H1 (cell line): ENCODE measurements at regions of chr11 and their contacts with region 1.

Region 1: DNA sequence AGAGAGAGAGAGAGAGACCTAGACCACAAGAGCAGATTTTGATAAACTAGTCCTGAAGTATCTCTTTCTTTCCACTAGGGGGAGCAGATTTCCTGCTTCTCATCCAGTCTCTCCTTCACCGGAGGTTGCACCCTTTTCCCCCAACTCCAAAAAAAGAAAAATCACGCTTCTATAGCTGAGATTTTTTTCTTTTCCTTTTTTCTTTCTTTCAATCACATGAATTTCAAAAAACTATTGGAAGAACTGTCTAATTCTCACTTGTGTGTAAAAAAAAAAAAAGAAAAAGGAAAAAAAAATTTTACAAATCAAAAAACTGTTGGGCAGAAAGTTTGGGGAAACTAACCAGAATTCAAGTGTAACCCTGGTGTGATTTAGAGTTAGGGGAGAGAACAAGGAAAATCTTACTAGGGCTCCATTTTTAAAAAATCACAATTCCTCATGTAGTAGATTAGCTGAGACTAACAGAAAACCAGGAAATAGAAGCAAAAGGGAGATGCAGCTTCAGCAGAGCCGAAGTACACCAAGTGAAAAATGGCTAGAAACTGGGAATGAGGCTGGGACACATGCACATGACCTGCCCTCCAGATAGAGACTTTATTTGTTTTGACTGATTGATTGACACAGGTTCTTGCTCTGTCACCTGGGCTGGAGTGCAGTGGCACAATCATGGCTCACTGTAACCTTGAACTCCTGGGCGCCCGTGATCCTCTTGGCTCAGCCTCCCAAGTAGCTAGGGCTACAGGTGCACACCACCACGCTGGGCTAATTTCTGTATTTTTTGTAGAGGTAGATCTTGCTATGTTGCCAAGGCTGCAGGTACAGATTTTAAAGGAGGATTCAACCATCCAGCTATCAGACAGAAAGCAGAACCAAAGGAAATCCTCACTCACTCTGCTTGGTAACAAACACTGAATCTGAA is 27.1 kb downstream of the SDHD start:
- DNase-seq: no peak
- H3K4me3 ChIP-seq: no peak overlapping the region
- H3K27ac ChIP-seq: no peak overlapping the region
- H3K4me1 ChIP-seq: no peaks in the 10 kb centered on the region
- H3K27me3 ChIP-seq: no peaks in the 10 kb centered on the region
- CTCF ChIP-seq: peak in 2 of 3 experiments; percentile 53 to 59; a peak in 3 of 4 replicates
- EP300 ChIP-seq: no peak
- POLR2A ChIP-seq: no peak
- RAD21 ChIP-seq: peak; percentile 64 to 65

Region 2: GRCh38 chr11:112086422-112087191 is 27.2 kb before region 1 on chr11 and contains the starts of genes SDHD and TIMM8B:
- CTCF ChIA-PET with region 1: interaction called, 13 read pairs
- POLR2A ChIA-PET with region 1: interaction called, 3 read pairs
- DNase-seq: peak; percentile 84 to 95
- H3K4me3 ChIP-seq: peak within 1 kb of the TSS; percentile 85 to 99 (median 90)
- H3K27ac ChIP-seq: peak within 1 kb of the TSS; percentile 79
- H3K4me1 ChIP-seq: peaks cover 0 to 3% (median 0%) of the 10 kb centered on the region in 4 experiments; a peak in 3 of 7 replicates
- H3K27me3 ChIP-seq: no peaks in the 10 kb centered on the region
- CTCF ChIP-seq: peak in 1 of 3 experiments; percentile 17; a peak in 2 of 4 replicates
- EP300 ChIP-seq: no peak
- POLR2A ChIP-seq: peak; percentile 28 to 61; a peak in 2 of 3 replicates
- RAD21 ChIP-seq: peak in 1 of 2 experiments; percentile 3; a peak in 1 of 4 replicates
- total RNA-seq, gene SDHD: 90.3 and 96.0 TPM in 2 replicates
- total RNA-seq, gene TIMM8B: 86.1 and 93.7 TPM in 2 replicates

Region 3: GRCh38 chr11:112128483-112129121 is 14.8 kb after region 1 on chr11:
- CTCF ChIA-PET with region 1: interaction called, 11 read pairs
- POLR2A ChIA-PET with region 1: no interaction called
- DNase-seq: no peak
- H3K4me3 ChIP-seq: no peak overlapping the region
- H3K27ac ChIP-seq: no peak overlapping the region
- H3K4me1 ChIP-seq: no peaks in the 10 kb centered on the region
- H3K27me3 ChIP-seq: no peaks in the 10 kb centered on the region
- CTCF ChIP-seq: no peak
- EP300 ChIP-seq: no peak
- POLR2A ChIP-seq: no peak
- RAD21 ChIP-seq: no peak

Region 4: GRCh38 chr11:112163875-112164685 is 50.3 kb after region 1 on chr11 and contains the start of gene IL18:
- CTCF ChIA-PET with region 1: interaction called, 16 read pairs
- POLR2A ChIA-PET with region 1: no interaction called
- DNase-seq: peak in 1 of 2 experiments; percentile 57
- H3K4me3 ChIP-seq: no peak within 1 kb of the TSS
- H3K27ac ChIP-seq: no peak within 1 kb of the TSS
- H3K4me1 ChIP-seq: no peaks in the 10 kb centered on the region; a peak in 2 of 7 replicates
- H3K27me3 ChIP-seq: no peaks in the 10 kb centered on the region
- CTCF ChIP-seq: no peak
- EP300 ChIP-seq: no peak
- POLR2A ChIP-seq: no peak
- RAD21 ChIP-seq: no peak
- total RNA-seq, gene IL18: 0.84 and 1.1 TPM in 2 replicates

Region 5: DNA sequence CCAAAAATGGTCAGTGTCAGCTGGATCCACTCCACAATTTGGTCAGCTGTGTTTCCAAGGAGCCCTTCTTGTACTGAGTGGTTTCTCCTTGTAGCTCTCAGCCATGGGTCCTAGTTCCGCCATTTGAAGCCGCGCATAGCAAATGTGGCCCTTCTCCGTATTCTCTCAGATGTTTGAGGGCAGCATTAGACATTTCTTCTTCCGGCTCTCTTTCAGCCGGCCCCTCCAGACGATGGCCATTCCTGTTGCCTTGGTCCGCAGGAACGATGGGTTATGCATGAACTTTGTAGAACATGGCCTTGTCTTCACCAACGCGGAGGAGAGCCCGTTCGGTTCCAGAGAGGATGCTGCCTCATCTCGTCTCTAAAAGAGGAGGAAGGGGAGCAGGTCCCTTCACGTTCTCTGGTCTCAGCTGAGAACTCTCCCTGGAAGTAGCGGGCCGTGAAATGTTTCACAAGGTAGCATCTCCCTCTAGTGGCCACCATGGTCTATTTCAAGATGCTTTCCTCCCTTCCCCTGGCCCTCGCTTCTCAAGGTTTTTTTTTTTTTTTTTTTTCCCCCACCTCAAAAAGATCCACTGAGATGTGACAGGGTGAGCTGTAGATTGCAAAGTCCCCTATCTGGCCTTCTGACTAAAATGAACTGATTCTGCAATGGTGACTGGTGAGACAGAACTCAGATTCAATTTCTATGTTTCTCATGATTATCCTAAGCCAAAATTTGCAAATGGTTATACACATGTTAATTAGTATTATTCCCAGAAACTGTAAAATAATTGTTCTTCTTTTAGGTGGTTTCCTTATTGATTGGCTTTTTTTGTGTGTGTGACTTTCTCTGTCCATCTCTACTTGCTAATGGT is 166.7 kb after region 1 on chr11:
- CTCF ChIA-PET with region 1: interaction called, 19 read pairs
- POLR2A ChIA-PET with region 1: no interaction called
- DNase-seq: peak in 1 of 2 experiments; percentile 69
- H3K4me3 ChIP-seq: peak overlapping the region; percentile 14 to 55 (median 44); a peak in 7 of 8 replicates
- H3K27ac ChIP-seq: no peak overlapping the region
- H3K4me1 ChIP-seq: peaks cover 0 to 4% (median 1%) of the 10 kb centered on the region in 4 experiments; a peak in 5 of 7 replicates
- H3K27me3 ChIP-seq: peaks cover 0 to 4% (median 2%) of the 10 kb centered on the region in 4 experiments; a peak in 2 of 7 replicates
- CTCF ChIP-seq: peak; percentile 47 to 81 (median 78)
- EP300 ChIP-seq: no peak
- POLR2A ChIP-seq: no peak
- RAD21 ChIP-seq: peak; percentile 80 to 83